IMR-90 (cell line): ENCODE measurements at regions of chrX and their contacts with region 1.

Region 1: DNA sequence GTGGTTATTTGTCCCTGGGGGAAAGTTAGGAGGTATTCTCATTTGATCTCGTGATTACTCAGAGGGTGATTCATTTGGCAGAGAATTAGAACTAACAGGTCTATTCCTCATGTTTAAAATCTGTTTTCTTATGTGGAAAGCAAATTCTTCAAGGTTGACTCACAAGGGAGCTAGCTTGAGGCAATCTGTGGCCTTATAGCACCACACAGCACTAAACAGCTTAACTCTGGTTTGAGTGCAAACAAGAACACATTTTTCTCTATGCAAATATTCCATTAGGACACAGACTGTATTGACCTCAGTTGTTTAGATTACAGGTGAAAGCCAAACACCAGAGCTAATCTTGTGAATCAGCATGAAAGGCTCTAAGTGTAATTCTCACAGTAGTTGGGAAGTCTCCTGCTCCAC is 694.4 kb upstream of the POU3F4 start:
- DNase-seq: peak; percentile 22
- ATAC-seq: no peak
- H3K4me3 ChIP-seq: no peak overlapping the region
- H3K27ac ChIP-seq: no peak overlapping the region
- H3K4me1 ChIP-seq: no peaks in the 10 kb centered on the region
- H3K27me3 ChIP-seq: no peaks in the 10 kb centered on the region
- CTCF ChIP-seq: no peak
- POLR2A ChIP-seq: no peak
- RAD21 ChIP-seq: no peak

Region 2: DNA sequence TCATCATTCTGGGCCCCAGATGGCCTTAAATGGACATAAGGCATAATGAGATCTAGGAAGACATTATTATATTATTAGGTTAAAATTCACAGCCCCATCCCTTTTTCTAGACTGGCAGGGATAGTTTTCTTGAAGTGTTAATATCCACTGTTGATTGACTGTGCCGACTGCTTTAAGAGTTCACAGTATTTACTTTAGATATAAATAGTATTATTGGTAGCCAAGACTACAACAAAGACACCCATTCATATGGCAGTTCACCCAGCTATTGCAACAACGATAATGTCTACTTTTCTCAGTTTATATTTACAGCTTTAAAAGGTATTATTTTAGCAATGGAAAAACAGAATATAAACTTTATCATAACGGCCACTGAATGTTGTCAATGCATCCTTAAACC is 227.8 kb before region 1 on chrX:
- CTCF ChIA-PET with region 1: no interaction called
- POLR2A ChIA-PET with region 1: no interaction called
- dilution Hi-C with region 1: no loop called
- in situ Hi-C with region 1: no loop called
- intact Hi-C with region 1: no loop called
- DNase-seq: no peak
- ATAC-seq: no peak
- H3K4me3 ChIP-seq: no peak overlapping the region
- H3K27ac ChIP-seq: no peak overlapping the region
- H3K4me1 ChIP-seq: no peaks in the 10 kb centered on the region
- H3K27me3 ChIP-seq: no peaks in the 10 kb centered on the region
- CTCF ChIP-seq: no peak
- POLR2A ChIP-seq: no peak
- RAD21 ChIP-seq: no peak

Region 3: DNA sequence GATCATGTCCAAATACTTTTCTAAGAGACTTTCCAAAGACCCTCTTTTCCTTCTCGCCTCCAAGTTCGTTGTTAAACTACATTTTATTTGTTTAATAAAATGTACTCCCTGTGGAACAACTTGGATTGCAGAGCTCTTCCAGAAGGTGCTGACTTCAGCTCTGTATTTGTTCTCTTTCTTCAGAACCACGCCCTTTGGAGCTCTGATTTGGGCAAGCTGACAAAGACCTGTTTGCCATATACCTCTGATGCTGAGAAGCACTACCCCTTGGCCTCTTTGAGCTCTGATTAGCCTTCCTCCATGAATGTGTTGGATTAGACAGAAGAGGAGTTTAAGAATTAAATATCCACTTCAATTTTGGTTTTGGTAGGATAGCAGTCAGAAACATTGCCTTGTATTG is 120.7 kb before region 1 on chrX:
- CTCF ChIA-PET with region 1: no interaction called
- POLR2A ChIA-PET with region 1: no interaction called
- dilution Hi-C with region 1: no loop called
- in situ Hi-C with region 1: no loop called
- intact Hi-C with region 1: no loop called
- DNase-seq: no peak
- ATAC-seq: no peak
- H3K4me3 ChIP-seq: no peak overlapping the region
- H3K27ac ChIP-seq: no peak overlapping the region
- H3K4me1 ChIP-seq: no peaks in the 10 kb centered on the region
- H3K27me3 ChIP-seq: no peaks in the 10 kb centered on the region
- CTCF ChIP-seq: no peak
- POLR2A ChIP-seq: no peak
- RAD21 ChIP-seq: no peak

Region 4: GRCh38 chrX:82748901-82749505 is 64.7 kb before region 1 on chrX:
- CTCF ChIA-PET with region 1: no interaction called
- POLR2A ChIA-PET with region 1: no interaction called
- dilution Hi-C with region 1: no loop called
- in situ Hi-C with region 1: loop called (anchors 10 kb)
- intact Hi-C with region 1: no loop called
- DNase-seq: no peak
- ATAC-seq: no peak
- H3K4me3 ChIP-seq: no peak overlapping the region
- H3K27ac ChIP-seq: no peak overlapping the region
- H3K4me1 ChIP-seq: no peaks in the 10 kb centered on the region
- H3K27me3 ChIP-seq: no peaks in the 10 kb centered on the region; the same call in 1 of the 2 replicates
- CTCF ChIP-seq: no peak
- POLR2A ChIP-seq: no peak
- RAD21 ChIP-seq: no peak

Region 5: DNA sequence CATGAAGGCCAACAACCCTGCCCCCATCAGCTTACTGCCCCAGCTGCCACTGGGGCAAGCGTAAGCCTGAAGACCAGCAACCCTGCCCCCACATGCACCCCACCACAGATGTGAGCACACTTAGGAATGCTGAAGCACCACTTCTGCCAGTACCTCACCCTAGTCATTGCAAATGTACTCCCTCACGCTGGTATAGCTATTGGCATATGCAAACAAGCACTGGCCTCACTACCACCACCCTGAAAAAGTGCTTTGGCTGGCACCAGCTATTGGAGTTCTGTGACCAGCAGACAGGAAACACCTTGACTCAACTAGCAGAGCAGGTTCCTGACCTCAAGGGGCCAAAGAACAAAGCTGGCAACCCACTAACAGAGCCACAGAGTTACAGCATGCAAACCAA is 160.0 kb after region 1 on chrX:
- CTCF ChIA-PET with region 1: no interaction called
- POLR2A ChIA-PET with region 1: no interaction called
- dilution Hi-C with region 1: no loop called
- in situ Hi-C with region 1: no loop called
- intact Hi-C with region 1: no loop called
- DNase-seq: no peak
- ATAC-seq: no peak
- H3K4me3 ChIP-seq: no peak overlapping the region
- H3K27ac ChIP-seq: no peak overlapping the region
- H3K4me1 ChIP-seq: no peaks in the 10 kb centered on the region
- H3K27me3 ChIP-seq: no peaks in the 10 kb centered on the region
- CTCF ChIP-seq: no peak
- POLR2A ChIP-seq: no peak
- RAD21 ChIP-seq: no peak